ENCODE measurements at regions of chr3 and their contacts with region 1.

Region 1: GRCh38 chr3:139389458-139390209 is at the start of gene COPB2:
- DNase-seq: peak; percentile 84 to 97 (median 87)
- ATAC-seq: peak; percentile 97
- H3K4me3 ChIP-seq: peak within 1 kb of the TSS; percentile 91
- H3K4me3 Mint-ChIP-seq: peak within 1 kb of the TSS; percentile 87 to 100 (median 99)
- H3K27ac ChIP-seq: peak within 1 kb of the TSS; percentile 93
- H3K27ac Mint-ChIP-seq: peak within 1 kb of the TSS; percentile 97 to 100 (median 99)
- H3K4me1 ChIP-seq: peaks cover 5 to 13% of the 10 kb centered on the region in 2 donors
- H3K4me1 Mint-ChIP-seq: peaks cover 34 to 70% (median 60%) of the 10 kb centered on the region in 7 donors
- H3K27me3 ChIP-seq: no peaks in the 10 kb centered on the region
- H3K27me3 Mint-ChIP-seq: peaks cover 0 to 13% (median 0%) of the 10 kb centered on the region in 5 donors
- total RNA-seq, gene COPB2: 23.5 to 109 (median 64.5) TPM

Region 2: DNA sequence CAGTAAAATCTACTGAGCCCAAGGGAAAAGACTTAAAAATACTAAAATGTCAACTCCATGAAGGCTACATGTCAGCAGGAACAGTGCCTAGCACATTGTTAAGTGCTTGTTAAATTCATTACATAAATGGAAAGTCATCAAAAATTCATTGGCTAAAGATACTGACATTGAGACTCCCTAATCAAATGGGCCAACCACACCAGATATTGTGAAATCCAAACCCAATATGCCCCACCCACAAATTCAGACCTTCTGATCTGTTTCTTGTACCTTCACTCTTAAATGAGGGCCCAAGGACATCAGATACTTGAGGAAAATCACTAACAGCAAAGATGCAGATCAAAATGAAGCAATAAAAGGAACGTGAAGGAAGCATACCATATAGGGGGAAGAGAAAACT is 25.1 kb before region 1 on chr3:
- CTCF ChIA-PET with region 1: no interaction called
- POLR2A ChIA-PET with region 1: no interaction called
- intact Hi-C with region 1: loop called in 1 of 2 experiments (anchors 2 kb)
- DNase-seq: no peak
- ATAC-seq: no peak
- H3K4me3 ChIP-seq: no peak overlapping the region
- H3K4me3 Mint-ChIP-seq: no peak overlapping the region
- H3K27ac ChIP-seq: no peak overlapping the region
- H3K27ac Mint-ChIP-seq: peak overlapping the region in 3 of 9 donors; percentile 11 to 39 (median 15)
- H3K4me1 ChIP-seq: no peaks in the 10 kb centered on the region
- H3K4me1 Mint-ChIP-seq: peaks cover 3 to 13% (median 8%) of the 10 kb centered on the region in 7 donors
- H3K27me3 ChIP-seq: no peaks in the 10 kb centered on the region
- H3K27me3 Mint-ChIP-seq: no peaks in the 10 kb centered on the region

Region 3: DNA sequence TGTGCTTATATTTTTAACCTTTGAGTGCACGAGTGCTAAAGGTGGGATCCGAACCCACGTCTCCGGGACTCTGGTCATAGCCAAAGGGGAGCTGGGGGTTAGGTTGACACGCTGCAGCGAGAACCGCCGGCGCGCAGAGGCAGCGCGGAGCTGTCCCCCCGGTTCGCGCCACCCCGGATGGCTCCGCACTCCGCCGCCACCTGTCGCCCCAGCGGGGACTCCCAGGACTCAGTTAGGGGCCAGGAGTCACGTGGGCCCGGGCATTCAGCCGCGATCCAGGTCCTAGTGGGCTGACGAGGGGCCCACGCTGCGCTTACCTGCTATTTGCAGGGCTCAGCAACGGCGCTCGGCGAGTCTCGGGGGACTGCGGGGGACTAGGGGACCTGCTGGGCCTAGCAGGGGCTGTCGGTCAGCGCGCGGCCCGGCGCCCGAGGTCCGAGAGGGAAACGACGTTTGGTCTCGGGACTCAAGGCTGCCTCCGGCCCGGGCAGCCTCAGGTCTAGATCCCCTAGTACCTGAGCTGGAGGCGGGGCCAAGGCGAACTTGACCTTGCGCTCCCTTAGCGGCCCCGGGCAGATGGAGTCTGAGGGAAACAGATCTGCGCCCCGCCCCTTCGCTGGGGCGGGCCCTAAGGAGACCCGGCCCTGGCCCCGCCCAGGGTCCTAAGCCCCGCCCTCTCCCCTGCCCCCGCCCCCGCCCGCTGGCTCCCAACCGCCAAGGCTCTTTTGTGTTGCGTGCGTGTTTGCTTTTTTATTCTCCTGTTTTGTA is 287.9 kb after region 1 on chr3 and contains the start of gene NMNAT3:
- CTCF ChIA-PET with region 1: no interaction called
- POLR2A ChIA-PET with region 1: no interaction called
- intact Hi-C with region 1: loop called in 1 of 2 experiments (anchors 1 kb)
- DNase-seq: peak; percentile 65 to 84 (median 79)
- ATAC-seq: peak; percentile 99
- H3K4me3 ChIP-seq: peak within 1 kb of the TSS; percentile 73
- H3K4me3 Mint-ChIP-seq: peak within 1 kb of the TSS; percentile 76 to 88 (median 86)
- H3K27ac ChIP-seq: peak within 1 kb of the TSS; percentile 78
- H3K27ac Mint-ChIP-seq: peak within 1 kb of the TSS in 6 of 9 donors; percentile 31 to 80 (median 52)
- H3K4me1 ChIP-seq: peaks cover 0 to 7% of the 10 kb centered on the region in 2 donors
- H3K4me1 Mint-ChIP-seq: peaks cover 6 to 23% (median 14%) of the 10 kb centered on the region in 7 donors
- H3K27me3 ChIP-seq: no peaks in the 10 kb centered on the region
- H3K27me3 Mint-ChIP-seq: peaks cover 0 to 14% (median 0%) of the 10 kb centered on the region in 5 donors
- total RNA-seq, gene NMNAT3: 0.56 to 7.4 (median 4.5) TPM